Common myeloid progenitor, CD34-positive (primary cell): ENCODE measurements at regions of chr19 and their contacts with region 1.

Region 1: DNA sequence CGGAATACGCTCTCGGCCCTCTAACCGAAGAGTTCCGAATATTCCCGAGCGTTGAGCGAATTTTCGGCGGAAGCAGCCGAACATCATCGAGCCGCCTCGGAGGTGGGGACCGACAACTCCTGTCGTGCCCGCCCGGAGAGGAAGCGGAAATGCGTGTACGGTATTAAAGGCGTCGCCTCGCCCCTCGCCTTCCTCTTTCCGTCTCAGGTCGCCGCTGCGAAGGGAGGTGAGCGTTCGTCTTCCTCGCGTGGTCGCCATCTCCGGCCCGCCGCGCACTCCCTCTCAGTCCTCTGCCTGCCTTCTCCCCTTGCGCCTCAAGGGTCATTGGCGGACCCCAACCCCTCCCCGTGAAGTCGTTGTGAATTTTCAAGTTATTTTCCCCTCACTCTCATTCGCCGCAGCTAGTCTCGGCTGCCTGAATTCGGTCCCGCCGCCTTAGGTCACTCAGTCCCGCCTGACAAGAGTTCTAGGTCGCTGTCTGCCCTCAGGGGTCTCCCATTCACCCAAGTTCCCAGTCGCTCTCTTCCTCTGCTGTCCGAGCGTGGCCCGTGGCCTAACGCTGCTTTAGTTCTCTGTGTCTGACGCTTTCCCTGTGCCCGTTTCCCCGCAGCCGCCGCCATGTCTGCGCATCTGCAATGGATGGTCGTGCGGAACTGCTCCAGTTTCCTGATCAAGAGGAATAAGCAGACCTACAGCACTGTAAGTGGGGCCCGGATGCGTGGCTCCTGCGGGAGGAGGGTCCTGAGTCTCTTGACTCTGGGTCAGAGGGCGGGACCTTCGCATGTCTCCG is at the start of gene RPL28:
- DNase-seq: peak; percentile 98 to 99 (median 99)
- H3K4me3 ChIP-seq: peak within 1 kb of the TSS; percentile 84 to 99 (median 99)
- H3K27ac ChIP-seq: peak within 1 kb of the TSS; percentile 80 to 95
- H3K4me1 ChIP-seq: peaks cover 0 to 62% (median 54%) of the 10 kb centered on the region in 4 experiments
- H3K27me3 ChIP-seq: no peaks in the 10 kb centered on the region

Region 2: GRCh38 chr19:55146078-55146704 is 239.7 kb before region 1 on chr19:
- CTCF ChIA-PET with region 1: interaction called, 14 read pairs
- POLR2A ChIA-PET with region 1: interaction called, 3 read pairs
- DNase-seq: peak in 2 of 3 donors; percentile 66 to 67
- H3K4me3 ChIP-seq: peak overlapping the region in 4 of 7 experiments; percentile 4 to 19 (median 10)
- H3K27ac ChIP-seq: peak overlapping the region in 1 of 2 experiments; percentile 25
- H3K4me1 ChIP-seq: peaks cover 0 to 16% (median 14%) of the 10 kb centered on the region in 4 experiments
- H3K27me3 ChIP-seq: peaks cover 0 to 82% (median 2%) of the 10 kb centered on the region in 5 experiments

Region 3: DNA sequence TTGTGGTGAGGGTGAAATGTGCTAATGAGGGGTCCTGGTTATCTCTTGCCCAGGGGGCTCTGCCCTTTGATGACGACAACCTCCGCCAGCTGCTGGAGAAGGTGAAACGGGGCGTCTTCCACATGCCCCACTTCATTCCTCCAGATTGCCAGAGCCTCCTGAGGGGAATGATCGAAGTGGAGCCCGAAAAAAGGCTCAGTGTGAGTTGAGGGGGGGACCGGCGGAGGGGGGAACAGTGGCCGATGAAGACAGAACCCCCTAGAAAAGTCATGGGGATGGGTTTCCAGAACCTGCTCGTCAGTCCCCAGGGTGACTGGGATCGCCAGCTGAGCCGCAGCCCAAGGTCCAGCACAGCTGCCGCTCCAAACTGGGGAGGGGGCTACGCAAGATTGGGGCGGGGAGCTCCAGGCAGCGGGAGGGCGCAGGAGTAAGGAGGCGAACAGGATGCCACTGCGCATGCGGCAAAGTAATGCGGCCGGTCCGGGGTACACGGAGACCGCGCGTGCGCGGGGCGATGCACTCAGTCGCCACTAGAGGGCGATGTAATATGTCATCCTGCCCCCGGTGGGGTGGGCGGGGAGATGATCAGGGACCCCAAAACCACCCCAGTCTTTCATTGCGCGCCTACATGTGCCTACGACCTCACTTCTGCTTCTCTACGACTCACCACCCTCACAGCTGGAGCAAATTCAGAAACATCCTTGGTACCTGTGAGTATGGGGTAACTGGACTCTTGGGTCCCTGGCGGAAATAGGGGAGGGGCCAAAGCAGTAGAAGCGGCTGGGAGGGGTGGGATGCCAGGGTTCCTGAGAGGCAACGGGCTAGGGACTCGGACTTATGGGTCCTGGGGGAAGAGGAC is 84.2 kb before region 1 on chr19:
- CTCF ChIA-PET with region 1: interaction called, 37 read pairs
- POLR2A ChIA-PET with region 1: interaction called, 3 read pairs
- DNase-seq: peak; percentile 84 to 93 (median 91)
- H3K4me3 ChIP-seq: peak overlapping the region; percentile 37 to 88 (median 69)
- H3K27ac ChIP-seq: peak overlapping the region; percentile 30 to 77
- H3K4me1 ChIP-seq: peaks cover 0 to 20% (median 13%) of the 10 kb centered on the region in 4 experiments
- H3K27me3 ChIP-seq: no peaks in the 10 kb centered on the region

Region 4: DNA sequence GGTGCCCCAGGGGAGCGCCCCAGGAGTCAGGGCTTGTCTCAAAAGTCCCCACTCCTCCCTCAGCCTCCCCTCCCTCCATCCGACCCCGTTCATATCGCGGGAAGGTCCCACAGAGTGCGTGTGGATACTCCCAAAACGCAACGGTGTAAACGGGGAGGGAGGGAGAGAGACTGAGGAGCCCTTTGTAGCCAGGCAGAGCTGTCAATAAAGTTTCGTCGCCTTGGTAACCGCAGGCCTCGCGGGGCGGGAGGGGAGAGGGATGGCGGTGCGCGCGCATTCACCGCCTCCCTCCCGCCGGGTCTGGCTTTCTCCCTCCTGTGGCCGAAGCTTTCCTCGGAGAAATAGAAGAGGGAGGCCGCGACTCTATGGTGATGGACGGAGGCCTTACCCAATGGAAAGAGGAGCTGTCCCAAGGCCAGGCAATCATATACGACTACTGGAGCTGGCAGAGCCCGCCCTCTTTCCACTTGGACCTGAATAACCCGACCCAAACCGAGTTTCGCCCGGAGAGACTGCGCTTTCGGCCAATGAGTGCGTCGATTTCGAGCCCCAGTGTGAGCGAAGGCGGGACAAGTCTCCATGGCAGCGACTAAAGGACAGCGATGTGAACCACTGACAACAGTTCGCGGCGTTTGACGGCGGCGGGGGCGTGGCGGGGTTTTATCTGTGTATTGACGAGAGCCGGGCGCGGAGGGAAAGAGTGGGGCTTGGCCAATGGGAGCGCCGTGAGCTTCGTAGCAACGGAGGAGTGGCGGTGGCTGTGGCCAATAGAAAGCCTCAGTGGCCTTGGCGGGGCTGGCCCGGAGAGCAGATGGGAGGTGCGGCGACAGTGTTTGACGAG is 46.7 kb before region 1 on chr19 and contains the start of gene KMT5C:
- CTCF ChIA-PET with region 1: interaction called, 7 read pairs
- POLR2A ChIA-PET with region 1: interaction called, 11 read pairs
- DNase-seq: peak; percentile 100
- H3K4me3 ChIP-seq: peak within 1 kb of the TSS; percentile 55 to 85 (median 81)
- H3K27ac ChIP-seq: peak within 1 kb of the TSS; percentile 99 to 100
- H3K4me1 ChIP-seq: peaks cover 0 to 27% (median 25%) of the 10 kb centered on the region in 4 experiments
- H3K27me3 ChIP-seq: no peaks in the 10 kb centered on the region

Region 5: GRCh38 chr19:55407800-55408532 is 22.0 kb after region 1 on chr19:
- CTCF ChIA-PET with region 1: interaction called, 7 read pairs
- POLR2A ChIA-PET with region 1: interaction called, 14 read pairs
- DNase-seq: peak; percentile 100
- H3K4me3 ChIP-seq: peak overlapping the region in 6 of 7 experiments; percentile 68 to 87 (median 80)
- H3K27ac ChIP-seq: peak overlapping the region; percentile 88 to 94
- H3K4me1 ChIP-seq: peaks cover 5 to 24% (median 22%) of the 10 kb centered on the region in 4 experiments
- H3K27me3 ChIP-seq: no peaks in the 10 kb centered on the region